H1 (cell line): ENCODE measurements at regions of chr4 and their contacts with region 1.

Region 1: DNA sequence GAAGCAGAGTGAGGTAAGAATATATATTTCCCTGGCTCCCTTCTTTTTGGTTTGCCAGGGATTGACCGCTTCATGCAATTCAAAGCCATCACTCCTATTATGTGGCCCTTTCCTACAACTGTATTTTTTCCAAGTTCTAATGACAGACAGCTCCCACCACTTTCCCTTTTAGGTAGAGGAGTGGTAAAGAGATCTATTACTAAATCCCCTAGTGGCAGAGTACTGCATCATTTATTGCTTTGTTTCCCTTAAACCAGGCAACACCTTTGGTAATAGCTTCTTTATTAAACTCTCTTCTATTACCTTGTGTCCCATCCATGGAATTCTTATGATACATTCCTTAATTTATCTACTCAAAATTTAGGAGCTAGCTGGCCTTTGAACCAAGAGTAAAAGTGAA is 90.7 kb downstream of the CNOT6L start:
- DNase-seq: no peak
- H3K4me3 ChIP-seq: no peak overlapping the region
- H3K27ac ChIP-seq: no peak overlapping the region
- H3K4me1 ChIP-seq: no peaks in the 10 kb centered on the region
- H3K27me3 ChIP-seq: no peaks in the 10 kb centered on the region
- CTCF ChIP-seq: peak in 1 of 3 experiments; percentile 38; a peak in 2 of 4 replicates
- EP300 ChIP-seq: no peak
- POLR2A ChIP-seq: no peak
- RAD21 ChIP-seq: no peak

Region 2: GRCh38 chr4:77715414-77716290 is 12.8 kb before region 1 on chr4:
- CTCF ChIA-PET with region 1: interaction called, 11 read pairs
- POLR2A ChIA-PET with region 1: no interaction called
- DNase-seq: no peak
- H3K4me3 ChIP-seq: no peak overlapping the region
- H3K27ac ChIP-seq: no peak overlapping the region
- H3K4me1 ChIP-seq: peaks cover 0 to 12% (median 2%) of the 10 kb centered on the region in 4 experiments; a peak in 3 of 7 replicates
- H3K27me3 ChIP-seq: no peaks in the 10 kb centered on the region
- CTCF ChIP-seq: no peak
- EP300 ChIP-seq: no peak
- POLR2A ChIP-seq: no peak
- RAD21 ChIP-seq: no peak

Region 3: DNA sequence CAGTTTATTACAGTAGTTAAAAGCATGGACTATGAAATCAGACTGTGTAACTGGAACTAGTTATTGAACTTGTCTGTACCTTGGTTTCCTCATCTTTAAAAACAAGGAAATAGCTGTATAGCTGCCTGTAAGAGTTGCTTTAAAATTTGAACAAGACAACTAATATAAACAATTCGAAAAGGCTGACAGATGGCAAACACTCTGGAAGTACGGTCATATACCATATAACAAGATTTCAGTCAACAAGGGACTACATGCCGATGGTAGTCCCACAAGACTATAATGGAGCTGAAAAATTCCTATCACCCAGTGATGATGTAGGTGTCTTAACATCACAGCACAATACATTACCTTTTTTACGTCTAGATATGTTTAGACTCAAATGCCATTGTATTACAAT is 12.1 kb after region 1 on chr4:
- CTCF ChIA-PET with region 1: interaction called, 12 read pairs
- POLR2A ChIA-PET with region 1: no interaction called
- DNase-seq: no peak
- H3K4me3 ChIP-seq: no peak overlapping the region
- H3K27ac ChIP-seq: no peak overlapping the region
- H3K4me1 ChIP-seq: no peaks in the 10 kb centered on the region
- H3K27me3 ChIP-seq: no peaks in the 10 kb centered on the region
- CTCF ChIP-seq: no peak
- EP300 ChIP-seq: no peak
- POLR2A ChIP-seq: no peak
- RAD21 ChIP-seq: no peak